CD4-positive, alpha-beta T cell (primary cell): ENCODE measurements at regions of chr5 and their contacts with region 1.

Region 1: GRCh38 chr5:32585446-32586275 is at the start of gene SUB1:
- DNase-seq: peak; percentile 88 to 97 (median 93)
- ATAC-seq: peak; percentile 91
- H3K4me3 ChIP-seq: peak within 1 kb of the TSS; percentile 84
- H3K4me3 Mint-ChIP-seq: peak within 1 kb of the TSS; percentile 96
- H3K27ac ChIP-seq: peak within 1 kb of the TSS; percentile 99 to 100
- H3K27ac Mint-ChIP-seq: peak within 1 kb of the TSS; percentile 97
- H3K4me1 ChIP-seq: peaks cover 58% of the 10 kb centered on the region
- H3K4me1 Mint-ChIP-seq: peaks cover 73% of the 10 kb centered on the region
- H3K27me3 ChIP-seq: no peaks in the 10 kb centered on the region
- H3K27me3 Mint-ChIP-seq: no peaks in the 10 kb centered on the region
- CTCF ChIP-seq: no peak
- total RNA-seq, gene SUB1: 327 to 344 TPM

Region 2: DNA sequence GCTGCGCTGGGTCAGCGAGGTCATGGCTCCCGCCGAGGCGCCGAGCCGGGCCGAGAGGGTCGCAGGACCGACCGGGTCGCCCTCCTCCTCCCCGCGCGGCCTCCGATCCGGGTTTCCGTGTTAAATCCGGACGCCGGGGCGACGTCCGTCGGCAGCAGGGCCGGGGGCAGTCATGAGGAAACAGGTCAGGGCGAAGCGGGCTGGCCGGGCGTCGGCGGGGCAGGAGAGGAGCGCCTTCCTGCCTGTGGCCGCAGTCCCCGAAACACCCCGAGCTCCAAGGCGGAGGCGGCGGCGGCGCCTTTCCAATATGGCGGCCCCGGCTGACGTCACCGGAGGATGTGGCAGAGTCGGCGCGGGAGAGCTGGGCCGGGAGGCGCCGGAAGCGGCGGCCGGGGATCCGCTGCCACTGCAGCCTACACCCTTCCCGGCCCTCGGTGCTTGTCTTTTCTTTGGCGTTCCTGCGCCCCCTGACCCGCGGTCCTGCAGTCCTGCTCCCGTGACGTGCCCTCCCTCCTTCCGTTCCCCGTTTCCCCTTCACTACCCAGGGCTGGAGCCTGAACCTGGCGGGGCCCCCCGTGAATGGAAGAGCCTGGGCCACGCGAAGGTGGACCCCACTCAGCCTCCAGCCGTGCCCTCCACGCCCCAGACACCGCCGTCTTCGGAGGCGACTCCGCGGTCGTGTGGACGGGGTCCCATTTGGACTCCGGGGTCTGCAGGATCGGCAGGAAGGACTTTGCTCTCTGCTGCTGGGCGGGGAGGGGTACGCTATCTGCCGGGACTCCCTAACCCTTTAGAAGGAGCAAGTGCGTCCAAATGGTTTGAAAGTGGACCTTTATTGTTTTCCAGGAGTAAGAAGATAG is 411.4 kb before region 1 on chr5 and contains the start of gene GOLPH3:
- CTCF ChIA-PET with region 1: interaction called, 3 read pairs
- POLR2A ChIA-PET with region 1: interaction called, 9 read pairs
- intact Hi-C with region 1: loop called (anchors 5 to 10 kb)
- DNase-seq: peak; percentile 84 to 94 (median 91)
- ATAC-seq: peak; percentile 84
- H3K4me3 ChIP-seq: peak within 1 kb of the TSS; percentile 90
- H3K4me3 Mint-ChIP-seq: peak within 1 kb of the TSS; percentile 99
- H3K27ac ChIP-seq: peak within 1 kb of the TSS; percentile 89 to 95
- H3K27ac Mint-ChIP-seq: peak within 1 kb of the TSS; percentile 95
- H3K4me1 ChIP-seq: peaks cover 18% of the 10 kb centered on the region
- H3K4me1 Mint-ChIP-seq: peaks cover 39% of the 10 kb centered on the region
- H3K27me3 ChIP-seq: no peaks in the 10 kb centered on the region
- H3K27me3 Mint-ChIP-seq: peaks cover 6% of the 10 kb centered on the region
- CTCF ChIP-seq: no peak
- total RNA-seq, gene GOLPH3: 52.0 to 55.4 TPM

Region 3: GRCh38 chr5:32223946-32224608 is 361.6 kb before region 1 on chr5:
- CTCF ChIA-PET with region 1: no interaction called
- POLR2A ChIA-PET with region 1: no interaction called
- intact Hi-C with region 1: no loop called
- DNase-seq: no peak
- ATAC-seq: no peak
- H3K4me3 ChIP-seq: no peak overlapping the region
- H3K4me3 Mint-ChIP-seq: no peak overlapping the region
- H3K27ac ChIP-seq: no peak overlapping the region
- H3K27ac Mint-ChIP-seq: no peak overlapping the region
- H3K4me1 ChIP-seq: no peaks in the 10 kb centered on the region
- H3K4me1 Mint-ChIP-seq: no peaks in the 10 kb centered on the region
- H3K27me3 ChIP-seq: no peaks in the 10 kb centered on the region
- H3K27me3 Mint-ChIP-seq: no peaks in the 10 kb centered on the region
- CTCF ChIP-seq: no peak

Region 4: GRCh38 chr5:32390819-32391591 is 194.7 kb before region 1 on chr5:
- CTCF ChIA-PET with region 1: no interaction called
- POLR2A ChIA-PET with region 1: no interaction called
- intact Hi-C with region 1: loop called in 1 of 2 experiments (anchors 10 kb)
- DNase-seq: peak in 2 of 14 experiments; percentile 29 to 44
- ATAC-seq: no peak
- H3K4me3 ChIP-seq: no peak overlapping the region
- H3K4me3 Mint-ChIP-seq: no peak overlapping the region
- H3K27ac ChIP-seq: no peak overlapping the region
- H3K27ac Mint-ChIP-seq: no peak overlapping the region
- H3K4me1 ChIP-seq: no peaks in the 10 kb centered on the region
- H3K4me1 Mint-ChIP-seq: no peaks in the 10 kb centered on the region
- H3K27me3 ChIP-seq: no peaks in the 10 kb centered on the region
- H3K27me3 Mint-ChIP-seq: no peaks in the 10 kb centered on the region
- CTCF ChIP-seq: no peak

Region 5: GRCh38 chr5:32489791-32490582 is 95.7 kb before region 1 on chr5:
- CTCF ChIA-PET with region 1: interaction called, 69 read pairs
- POLR2A ChIA-PET with region 1: interaction called, 26 read pairs
- intact Hi-C with region 1: loop called (anchors 1 kb)
- DNase-seq: peak; percentile 56 to 85 (median 66)
- ATAC-seq: peak; percentile 71
- H3K4me3 ChIP-seq: no peak overlapping the region
- H3K4me3 Mint-ChIP-seq: no peak overlapping the region
- H3K27ac ChIP-seq: no peak overlapping the region
- H3K27ac Mint-ChIP-seq: no peak overlapping the region
- H3K4me1 ChIP-seq: no peaks in the 10 kb centered on the region
- H3K4me1 Mint-ChIP-seq: no peaks in the 10 kb centered on the region
- H3K27me3 ChIP-seq: no peaks in the 10 kb centered on the region
- H3K27me3 Mint-ChIP-seq: no peaks in the 10 kb centered on the region
- CTCF ChIP-seq: peak; percentile 89

Region 6: GRCh38 chr5:32504989-32505596 is 80.6 kb before region 1 on chr5:
- CTCF ChIA-PET with region 1: interaction called, 5 read pairs
- POLR2A ChIA-PET with region 1: interaction called, 20 read pairs
- intact Hi-C with region 1: no loop called
- DNase-seq: peak in 4 of 14 experiments; percentile 20 to 28 (median 27)
- ATAC-seq: peak; percentile 39
- H3K4me3 ChIP-seq: no peak overlapping the region
- H3K4me3 Mint-ChIP-seq: no peak overlapping the region
- H3K27ac ChIP-seq: no peak overlapping the region
- H3K27ac Mint-ChIP-seq: peak overlapping the region; percentile 46
- H3K4me1 ChIP-seq: peaks cover 12% of the 10 kb centered on the region
- H3K4me1 Mint-ChIP-seq: peaks cover 26% of the 10 kb centered on the region
- H3K27me3 ChIP-seq: no peaks in the 10 kb centered on the region
- H3K27me3 Mint-ChIP-seq: no peaks in the 10 kb centered on the region
- CTCF ChIP-seq: no peak